ENCODE measurements at regions of chr5 and their contacts with region 1.

Region 1: GRCh38 chr5:141598391-141599350 is 20.1 kb downstream of the DIAPH1 start:
- DNase-seq: no peak
- ATAC-seq: peak; percentile 61 to 75 (median 71)
- H3K4me3 ChIP-seq: no peak overlapping the region
- H3K4me3 Mint-ChIP-seq: peak overlapping the region; percentile 2 to 47 (median 43)
- H3K27ac ChIP-seq: peak overlapping the region; percentile 60
- H3K27ac Mint-ChIP-seq: peak overlapping the region; percentile 82 to 90
- H3K4me1 ChIP-seq: peaks cover 50 to 61% of the 10 kb centered on the region in 2 experiments
- H3K4me1 Mint-ChIP-seq: peaks cover 75 to 86% (median 83%) of the 10 kb centered on the region in 3 donors
- H3K27me3 ChIP-seq: no peaks in the 10 kb centered on the region
- H3K27me3 Mint-ChIP-seq: no peaks in the 10 kb centered on the region

Region 2: GRCh38 chr5:141570655-141571054 is 28.0 kb before region 1 on chr5:
- CTCF ChIA-PET with region 1: interaction called, 5 to 11 read pairs
- POLR2A ChIA-PET with region 1: no interaction called
- DNase-seq: no peak
- ATAC-seq: no peak
- H3K4me3 ChIP-seq: no peak overlapping the region
- H3K4me3 Mint-ChIP-seq: no peak overlapping the region
- H3K27ac ChIP-seq: no peak overlapping the region
- H3K27ac Mint-ChIP-seq: peak overlapping the region; percentile 12 to 40
- H3K4me1 ChIP-seq: no peaks in the 10 kb centered on the region
- H3K4me1 Mint-ChIP-seq: peaks cover 11 to 18% (median 12%) of the 10 kb centered on the region in 3 donors
- H3K27me3 ChIP-seq: no peaks in the 10 kb centered on the region
- H3K27me3 Mint-ChIP-seq: no peaks in the 10 kb centered on the region

Region 3: DNA sequence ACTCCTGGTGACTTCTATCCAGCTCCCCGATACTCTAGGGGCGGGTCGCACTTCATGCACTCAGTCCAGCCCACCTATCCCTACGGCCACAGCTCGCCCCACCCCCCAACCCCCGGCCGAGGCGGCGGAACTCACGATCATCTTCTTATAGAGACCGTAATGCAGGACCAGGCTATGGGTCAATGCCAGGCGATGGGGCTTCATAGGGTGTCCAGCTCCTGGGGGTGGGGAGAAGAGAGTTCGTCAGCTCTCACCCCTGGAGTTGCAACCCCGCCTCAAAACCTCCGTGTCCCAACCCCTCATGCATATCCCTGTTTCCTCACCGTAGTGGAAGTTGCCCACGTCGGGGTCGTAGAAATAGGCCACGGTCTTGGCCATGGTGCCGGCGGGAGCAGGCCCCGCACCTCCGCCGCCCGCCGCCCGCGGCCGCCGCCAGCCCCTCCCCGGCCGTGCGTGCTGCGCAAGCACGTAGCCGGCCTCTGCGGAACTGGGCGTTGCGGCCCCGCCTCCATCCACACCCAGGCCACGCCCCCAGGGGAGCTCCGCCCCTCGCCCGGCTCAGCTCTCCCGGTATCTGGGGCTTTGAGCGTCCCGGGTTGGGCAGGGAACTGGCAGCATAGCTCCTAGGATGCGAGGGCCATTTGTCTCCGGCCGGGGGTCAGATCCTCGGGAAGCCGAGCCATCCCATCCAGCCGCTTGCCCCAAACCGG is 37.9 kb after region 1 on chr5 and contains the starts of genes HDAC3 and RELL2:
- CTCF ChIA-PET with region 1: interaction called in 1 of 2 experiments, 53 read pairs
- POLR2A ChIA-PET with region 1: interaction called in 1 of 2 experiments, 5 read pairs
- DNase-seq: peak; percentile 78 to 97 (median 90)
- ATAC-seq: peak; percentile 81 to 93 (median 89)
- H3K4me3 ChIP-seq: peak within 1 kb of the TSS; percentile 90 to 99
- H3K4me3 Mint-ChIP-seq: peak within 1 kb of the TSS; percentile 84 to 92 (median 91)
- H3K27ac ChIP-seq: peak within 1 kb of the TSS; percentile 79
- H3K27ac Mint-ChIP-seq: peak within 1 kb of the TSS; percentile 87 to 93
- H3K4me1 ChIP-seq: peaks cover 7 to 40% of the 10 kb centered on the region in 2 experiments
- H3K4me1 Mint-ChIP-seq: peaks cover 40 to 48% (median 44%) of the 10 kb centered on the region in 3 donors
- H3K27me3 ChIP-seq: no peaks in the 10 kb centered on the region
- H3K27me3 Mint-ChIP-seq: no peaks in the 10 kb centered on the region
- total RNA-seq, gene HDAC3: 68.5 to 78.5 (median 73.8) TPM
- total RNA-seq, gene RELL2: 15.3 to 30.7 (median 26.0) TPM

Measured in T-cell (primary cell).